Right ventricle myocardium inferior (tissue), 1 donor: ENCODE measurements at regions of chr5 and their contacts with region 1.

Region 1: DNA sequence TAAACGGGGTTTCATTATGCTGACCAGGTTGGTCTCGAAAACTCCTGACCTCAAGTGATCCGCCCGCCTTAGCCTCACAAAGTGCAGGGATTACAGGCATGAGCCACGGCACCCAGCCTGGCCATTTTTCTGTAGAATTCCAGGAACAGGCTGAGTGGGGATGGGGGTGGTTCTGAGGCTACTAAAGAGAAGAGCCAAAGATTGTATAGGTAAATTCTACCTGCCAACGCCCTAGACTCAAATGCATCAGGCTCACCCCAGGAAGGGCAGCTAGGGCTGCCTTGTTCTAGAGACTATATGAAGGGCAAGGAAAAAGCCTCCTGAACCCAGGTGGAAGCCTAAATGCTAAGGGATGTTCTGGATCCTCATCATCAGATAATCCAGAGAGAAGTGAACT is 1.6 kb upstream of the C5orf52 start:
- DNase-seq: no peak
- ATAC-seq: no peak

Region 2: GRCh38 chr5:156715287-156715686 is 954.4 kb before region 1 on chr5:
- intact Hi-C with region 1: no loop called
- DNase-seq: no peak
- ATAC-seq: no peak

Region 3: DNA sequence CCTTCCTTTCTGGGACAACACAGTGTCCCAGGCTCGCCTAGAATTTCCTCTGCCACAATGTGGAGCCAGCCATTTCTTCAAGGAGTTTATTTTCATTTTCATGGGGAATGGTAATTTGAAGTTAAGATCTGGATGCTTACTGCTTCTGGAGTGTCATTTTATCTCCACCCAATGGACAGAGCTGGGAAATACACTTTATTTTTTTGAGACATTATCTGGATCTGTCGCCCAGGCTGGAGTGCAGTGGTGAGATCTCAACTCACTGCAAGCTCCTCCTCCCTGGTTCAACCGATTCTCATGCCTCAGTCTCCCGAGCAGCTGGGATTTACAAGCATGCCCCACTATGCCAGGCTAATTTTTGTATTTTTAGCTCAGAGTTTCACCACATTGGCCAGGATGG is 48.8 kb after region 1 on chr5:
- intact Hi-C with region 1: loop called (anchors 2 kb)
- DNase-seq: no peak
- ATAC-seq: peak; percentile 89